H1 (cell line): ENCODE measurements at regions of chr3 and their contacts with region 1.

Region 1: GRCh38 chr3:107421170-107421792 is 44.0 kb downstream of the CCDC54 start:
- DNase-seq: no peak
- H3K4me3 ChIP-seq: no peak overlapping the region
- H3K27ac ChIP-seq: no peak overlapping the region
- H3K4me1 ChIP-seq: no peaks in the 10 kb centered on the region
- H3K27me3 ChIP-seq: no peaks in the 10 kb centered on the region
- CTCF ChIP-seq: peak in 2 of 3 experiments; percentile 54 to 64; a peak in 3 of 4 replicates
- EP300 ChIP-seq: no peak
- POLR2A ChIP-seq: no peak
- RAD21 ChIP-seq: peak; percentile 59 to 69

Region 2: DNA sequence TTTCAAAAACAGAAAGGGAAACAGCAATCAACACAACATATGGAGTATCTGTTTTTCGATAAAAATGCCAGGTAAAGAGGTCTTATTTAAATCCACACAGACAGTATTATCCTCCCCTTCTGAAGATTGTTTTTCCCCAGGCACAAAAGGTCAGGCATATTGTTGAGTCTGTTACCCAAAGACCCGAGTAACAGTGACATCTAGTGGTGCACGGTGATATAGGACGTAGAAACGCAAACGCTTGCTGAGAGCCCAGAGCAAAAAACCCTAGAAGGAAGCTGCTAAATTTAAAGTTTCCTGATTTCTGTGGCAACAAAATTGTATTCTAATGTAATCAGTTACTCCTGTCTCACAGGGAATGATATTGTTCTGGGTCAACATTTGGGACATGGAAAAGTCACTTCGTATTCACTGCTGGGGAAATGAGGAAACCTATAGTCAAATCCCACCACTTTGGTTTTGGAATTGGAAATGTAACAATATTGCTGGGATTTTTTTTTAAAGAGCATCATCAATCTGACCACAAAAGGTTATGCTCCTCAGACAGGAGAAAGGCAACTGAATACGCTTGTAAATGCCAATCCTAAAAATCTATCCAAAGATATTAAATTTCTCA is 356.7 kb before region 1 on chr3:
- CTCF ChIA-PET with region 1: no interaction called
- POLR2A ChIA-PET with region 1: no interaction called
- DNase-seq: peak; percentile 31 to 79
- H3K4me3 ChIP-seq: no peak overlapping the region
- H3K27ac ChIP-seq: no peak overlapping the region
- H3K4me1 ChIP-seq: peaks cover 0 to 8% (median 2%) of the 10 kb centered on the region in 4 experiments; a peak in 5 of 7 replicates
- H3K27me3 ChIP-seq: no peaks in the 10 kb centered on the region
- CTCF ChIP-seq: peak; percentile 15 to 78 (median 77)
- EP300 ChIP-seq: no peak
- POLR2A ChIP-seq: no peak
- RAD21 ChIP-seq: peak; percentile 97

Region 3: DNA sequence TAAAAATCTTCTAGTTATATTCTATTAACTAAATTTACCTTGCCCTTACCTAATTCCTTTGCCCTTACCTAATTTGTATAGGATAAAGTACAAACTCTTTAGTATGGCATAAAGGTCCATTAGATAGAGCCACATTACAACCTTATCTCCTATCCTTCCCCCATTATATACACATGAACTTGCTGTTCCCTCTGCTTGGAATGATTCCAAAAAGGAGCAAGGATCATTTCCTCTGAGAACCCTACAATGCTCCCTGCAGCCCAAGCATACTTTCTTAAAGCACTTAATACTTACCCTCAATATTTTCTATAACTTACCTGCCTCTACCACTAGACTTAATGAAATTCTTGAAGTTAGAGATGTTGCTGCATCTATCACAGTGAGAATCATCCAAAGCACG is 163.0 kb before region 1 on chr3:
- CTCF ChIA-PET with region 1: interaction called, 10 read pairs
- POLR2A ChIA-PET with region 1: no interaction called
- DNase-seq: no peak
- H3K4me3 ChIP-seq: no peak overlapping the region
- H3K27ac ChIP-seq: no peak overlapping the region
- H3K4me1 ChIP-seq: no peaks in the 10 kb centered on the region
- H3K27me3 ChIP-seq: no peaks in the 10 kb centered on the region
- CTCF ChIP-seq: no peak
- EP300 ChIP-seq: no peak
- POLR2A ChIP-seq: no peak
- RAD21 ChIP-seq: no peak

Region 4: GRCh38 chr3:107284612-107285011 is 136.7 kb before region 1 on chr3:
- CTCF ChIA-PET with region 1: interaction called, 10 read pairs
- POLR2A ChIA-PET with region 1: no interaction called
- DNase-seq: no peak
- H3K4me3 ChIP-seq: no peak overlapping the region
- H3K27ac ChIP-seq: no peak overlapping the region
- H3K4me1 ChIP-seq: peaks cover 0 to 17% (median 8%) of the 10 kb centered on the region in 4 experiments; a peak in 6 of 7 replicates
- H3K27me3 ChIP-seq: no peaks in the 10 kb centered on the region
- CTCF ChIP-seq: no peak
- EP300 ChIP-seq: no peak
- POLR2A ChIP-seq: no peak
- RAD21 ChIP-seq: no peak

Region 5: GRCh38 chr3:107409365-107409764 is 11.9 kb before region 1 on chr3:
- CTCF ChIA-PET with region 1: interaction called, 11 read pairs
- POLR2A ChIA-PET with region 1: no interaction called
- DNase-seq: no peak
- H3K4me3 ChIP-seq: no peak overlapping the region
- H3K27ac ChIP-seq: no peak overlapping the region
- H3K4me1 ChIP-seq: no peaks in the 10 kb centered on the region
- H3K27me3 ChIP-seq: no peaks in the 10 kb centered on the region
- CTCF ChIP-seq: no peak
- EP300 ChIP-seq: no peak
- POLR2A ChIP-seq: no peak
- RAD21 ChIP-seq: no peak